ENCODE measurements at regions of chr17 and their contacts with region 1.

Region 1: DNA sequence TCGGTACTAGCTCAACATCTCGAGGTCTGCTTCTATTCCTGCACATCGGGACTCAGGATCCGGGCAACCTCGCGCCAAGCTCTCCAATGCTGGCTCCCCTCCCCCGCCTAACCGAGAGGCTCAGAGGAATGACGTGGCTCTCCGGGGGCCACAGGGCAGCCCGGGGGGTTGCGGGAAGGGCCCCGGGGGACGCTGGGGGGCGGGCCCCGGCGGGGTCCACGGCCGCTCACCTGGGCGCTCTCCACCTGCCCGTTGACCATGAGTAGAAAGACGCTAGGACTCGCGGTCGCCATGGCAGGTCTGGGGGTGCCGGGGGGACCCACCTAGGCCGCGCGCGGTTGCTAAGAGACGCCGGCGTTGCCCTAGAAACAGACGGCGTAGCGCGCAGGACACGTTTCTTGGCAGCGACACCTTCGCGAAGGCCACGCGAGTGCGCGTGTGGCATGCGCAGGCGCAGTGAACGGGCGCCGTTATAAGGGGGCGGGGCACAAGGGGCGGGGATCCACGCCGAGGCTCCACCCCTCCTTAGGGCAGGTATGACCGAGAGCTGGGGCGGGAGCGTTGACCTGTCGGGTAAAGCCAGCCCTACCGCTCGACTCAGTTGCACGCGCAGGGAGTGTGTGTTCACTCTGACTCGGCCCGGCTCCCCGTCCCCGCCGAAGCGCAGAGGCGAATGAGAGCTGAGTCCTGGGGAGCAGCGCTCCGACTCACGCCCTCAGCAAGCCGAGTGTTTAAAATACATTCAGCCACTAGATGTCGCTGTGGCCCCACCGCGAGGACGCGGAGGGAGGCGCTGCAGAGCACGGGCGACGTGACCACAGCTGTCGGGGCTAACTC is at the start of gene B9D1:
- DNase-seq: peak; percentile 89 to 99 (median 93)
- ATAC-seq: peak; percentile 85 to 88
- H3K4me3 Mint-ChIP-seq: peak within 1 kb of the TSS; percentile 81 to 97 (median 92)
- H3K27ac Mint-ChIP-seq: peak within 1 kb of the TSS; percentile 25 to 94 (median 88)
- H3K4me1 Mint-ChIP-seq: peaks cover 3 to 17% (median 7%) of the 10 kb centered on the region in 4 donors
- H3K27me3 Mint-ChIP-seq: peaks cover 10 to 46% (median 18%) of the 10 kb centered on the region in 5 donors
- polyA plus RNA-seq, gene B9D1: 0.75 to 1.8 (median 0.91) TPM

Region 2: DNA sequence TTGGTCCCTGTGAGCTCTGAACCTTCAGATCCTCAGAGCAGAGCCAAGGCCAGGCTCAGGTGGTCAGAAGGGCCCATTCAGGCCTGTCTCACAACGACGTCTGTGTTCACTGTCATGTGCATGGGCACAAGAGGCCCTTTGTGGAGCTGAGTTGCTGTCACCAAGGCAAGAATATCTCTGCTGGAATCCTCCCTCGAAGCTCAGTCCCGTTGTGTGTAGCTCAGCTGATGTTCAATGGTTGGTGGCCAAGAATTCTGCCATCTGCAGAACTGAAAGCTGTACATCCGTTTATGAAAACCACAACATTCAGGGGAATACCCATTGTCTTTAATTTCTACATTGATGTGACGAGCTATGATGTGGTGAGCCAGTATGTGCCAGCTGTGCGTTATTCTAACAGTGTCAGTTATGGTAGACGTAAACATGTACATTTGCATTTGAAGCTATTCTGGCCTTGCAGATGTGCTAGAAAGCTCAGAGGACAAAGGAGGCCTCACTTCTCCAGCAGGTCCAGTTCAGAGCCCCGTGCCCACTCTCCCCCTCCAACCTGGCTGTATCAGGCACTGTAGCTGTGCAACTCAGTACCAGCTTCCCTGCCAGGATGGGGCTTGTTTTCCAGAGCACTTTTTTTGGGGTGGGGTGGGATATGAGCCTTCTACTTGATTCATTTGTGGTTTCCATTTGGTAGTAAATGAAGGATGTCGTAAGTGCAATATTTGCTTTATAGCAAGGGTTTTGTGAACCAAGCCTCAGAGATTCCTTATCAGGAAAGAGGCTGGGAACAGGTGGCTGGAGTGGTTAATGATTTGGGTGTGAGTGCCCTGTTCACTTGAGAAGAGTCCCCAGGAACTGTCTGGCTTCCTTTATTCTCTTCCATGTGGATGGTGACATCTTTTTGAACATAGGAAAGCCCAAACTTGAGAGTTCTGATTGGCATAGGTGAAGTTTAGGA is 56.1 kb before region 1 on chr17:
- POLR2A ChIA-PET with region 1: no interaction called
- DNase-seq: peak in 9 of 10 donors; percentile 19 to 83 (median 56)
- ATAC-seq: peak; percentile 97 to 99
- H3K4me3 Mint-ChIP-seq: peak overlapping the region in 8 of 10 donors; percentile 33 to 68 (median 62)
- H3K27ac Mint-ChIP-seq: peak overlapping the region in 7 of 10 donors; percentile 29 to 89 (median 79)
- H3K4me1 Mint-ChIP-seq: peaks cover 19 to 53% (median 25%) of the 10 kb centered on the region in 4 donors
- H3K27me3 Mint-ChIP-seq: peaks cover 27 to 87% (median 42%) of the 10 kb centered on the region in 5 donors

Region 3: DNA sequence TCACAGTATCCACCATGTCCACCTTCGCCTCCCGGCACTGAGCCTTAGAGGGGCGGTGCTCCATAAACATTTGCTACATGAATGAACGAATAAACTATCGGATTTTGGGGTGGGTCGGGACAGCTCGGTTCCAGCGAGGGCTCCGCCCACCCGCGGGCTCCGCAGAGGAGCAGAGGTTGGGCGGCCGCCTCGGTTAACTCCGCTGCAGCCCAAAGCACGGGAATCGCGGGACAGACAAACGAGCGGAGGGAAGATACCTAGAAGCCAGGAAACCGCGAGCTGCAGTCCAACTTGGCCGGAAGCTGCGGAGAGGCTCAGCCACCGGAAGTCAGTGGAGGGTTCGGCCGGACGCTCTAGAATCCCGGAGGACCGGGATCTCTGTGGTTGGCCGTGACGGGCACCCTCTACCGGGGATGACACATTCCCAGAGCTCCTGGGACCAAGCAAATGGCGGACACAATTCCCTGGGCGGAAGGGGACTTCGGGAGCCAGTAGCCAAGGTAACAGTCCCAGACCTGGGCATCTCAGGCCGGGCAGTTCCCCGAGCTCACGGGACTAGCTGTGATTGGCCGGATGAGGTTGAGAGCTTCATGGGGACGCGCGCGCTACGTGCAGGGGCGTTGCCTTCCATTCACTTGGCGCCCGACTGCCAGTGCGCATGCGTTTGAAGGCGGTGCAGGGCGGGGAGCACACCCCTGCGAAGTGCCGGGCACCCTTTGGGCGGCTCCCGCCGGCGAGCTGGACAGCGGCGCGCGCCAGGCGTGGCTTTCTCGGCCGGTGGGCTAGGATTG is 15.3 kb after region 1 on chr17:
- POLR2A ChIA-PET with region 1: interaction called, 42 read pairs
- DNase-seq: peak; percentile 86 to 96 (median 90)
- ATAC-seq: peak; percentile 88
- H3K4me3 Mint-ChIP-seq: peak overlapping the region; percentile 94 to 100 (median 99)
- H3K27ac Mint-ChIP-seq: peak overlapping the region; percentile 95 to 99 (median 98)
- H3K4me1 Mint-ChIP-seq: peaks cover 12 to 23% (median 14%) of the 10 kb centered on the region in 4 donors
- H3K27me3 Mint-ChIP-seq: no peaks in the 10 kb centered on the region

Region 4: GRCh38 chr17:19533718-19534561 is 171.4 kb after region 1 on chr17 and contains the start of gene SLC47A1:
- POLR2A ChIA-PET with region 1: no interaction called
- DNase-seq: peak in 6 of 10 donors; percentile 9 to 60 (median 18)
- ATAC-seq: peak; percentile 62 to 90
- H3K4me3 Mint-ChIP-seq: peak within 1 kb of the TSS; percentile 76 to 89 (median 85)
- H3K27ac Mint-ChIP-seq: peak within 1 kb of the TSS in 3 of 10 donors; percentile 11 to 68 (median 51)
- H3K4me1 Mint-ChIP-seq: peaks cover 9 to 18% (median 11%) of the 10 kb centered on the region in 4 donors
- H3K27me3 Mint-ChIP-seq: peaks cover 30 to 55% (median 45%) of the 10 kb centered on the region in 5 donors
- polyA plus RNA-seq, gene SLC47A1: 0.29 to 0.69 TPM in 2 of 3 donors, not detected in the other